Mammary epithelial cell (primary cell): ENCODE measurements at regions of chrX and their contacts with region 1.

Region 1: GRCh38 chrX:38220024-38220414 is 652 bp downstream of the SRPX start:
- DNase-seq: peak; percentile 54
- H3K4me3 ChIP-seq: peak overlapping the region; percentile 55 to 71 (median 65)
- H3K27ac ChIP-seq: peak overlapping the region; percentile 60
- H3K4me1 ChIP-seq: peaks cover 19% of the 10 kb centered on the region
- H3K27me3 ChIP-seq: no peaks in the 10 kb centered on the region
- CTCF ChIP-seq: peak; percentile 20 to 52

Region 2: DNA sequence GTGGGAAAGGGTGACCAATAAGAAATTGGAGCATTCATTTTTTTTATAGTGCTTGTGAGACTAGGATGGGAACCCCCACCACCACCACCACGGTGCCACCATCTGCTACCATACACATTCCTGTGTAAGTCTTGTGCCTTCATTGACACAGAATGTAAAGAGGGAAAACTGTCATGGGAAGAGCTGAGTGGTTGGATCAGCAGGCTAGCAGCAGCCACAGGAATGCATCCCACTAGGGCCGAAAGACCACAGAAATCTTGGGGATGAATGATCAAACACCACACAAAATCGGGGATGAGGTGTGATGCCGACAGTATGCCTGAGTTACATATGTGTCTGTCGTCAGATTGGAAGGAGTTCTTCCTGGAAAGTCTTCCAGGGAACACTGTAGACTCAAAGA is 68.6 kb before region 1 on chrX:
- CTCF ChIA-PET with region 1: no interaction called
- dilution Hi-C with region 1: no loop called
- in situ Hi-C with region 1: no loop called
- intact Hi-C with region 1: no loop called
- DNase-seq: no peak
- H3K4me3 ChIP-seq: no peak overlapping the region
- H3K27ac ChIP-seq: no peak overlapping the region
- H3K4me1 ChIP-seq: no peaks in the 10 kb centered on the region
- H3K27me3 ChIP-seq: peaks cover 2% of the 10 kb centered on the region
- CTCF ChIP-seq: no peak

Region 3: DNA sequence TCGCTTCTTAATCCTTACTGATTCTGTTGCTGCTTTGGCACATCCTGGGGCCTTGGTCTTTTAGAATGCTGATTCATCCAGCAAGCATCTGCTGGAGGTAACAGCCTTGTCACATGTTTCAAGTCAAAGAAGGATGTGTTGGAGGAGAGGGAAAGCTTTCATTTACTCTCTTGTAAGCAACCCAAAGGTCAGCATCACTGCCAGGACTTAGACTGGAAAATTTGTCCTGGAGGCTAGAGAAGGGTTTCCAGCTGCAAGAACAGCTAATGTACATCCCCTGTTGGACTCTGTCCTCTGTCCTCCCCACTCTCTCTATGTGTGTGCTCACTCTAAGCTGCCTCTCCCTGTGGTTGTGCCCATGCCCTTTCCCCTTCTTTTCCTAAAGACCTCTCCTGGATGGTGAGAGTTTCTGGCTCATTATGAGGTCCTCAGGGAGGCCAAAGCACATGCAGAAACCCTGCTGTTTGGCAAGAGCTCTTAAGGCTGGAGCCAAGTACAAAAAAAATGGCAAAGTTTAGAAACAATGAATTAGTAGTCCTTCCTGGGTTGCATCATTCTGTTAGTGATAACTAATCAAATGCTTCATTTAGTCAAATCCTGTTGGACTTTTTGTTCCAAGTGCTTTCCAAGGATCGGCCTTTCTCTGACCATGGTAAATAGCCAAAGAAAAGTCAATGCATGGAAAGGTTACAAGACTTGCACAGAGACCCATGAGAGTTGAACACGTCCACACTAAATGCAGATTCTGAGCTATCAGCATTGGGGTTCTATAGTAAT is 14.1 kb after region 1 on chrX:
- CTCF ChIA-PET with region 1: no interaction called
- dilution Hi-C with region 1: no loop called
- in situ Hi-C with region 1: no loop called
- intact Hi-C with region 1: loop called (anchors 2 kb)
- DNase-seq: peak; percentile 61
- H3K4me3 ChIP-seq: no peak overlapping the region
- H3K27ac ChIP-seq: peak overlapping the region; percentile 31
- H3K4me1 ChIP-seq: peaks cover 33% of the 10 kb centered on the region
- H3K27me3 ChIP-seq: no peaks in the 10 kb centered on the region
- CTCF ChIP-seq: no peak

Region 4: GRCh38 chrX:38260231-38260630 is 40.2 kb after region 1 on chrX:
- CTCF ChIA-PET with region 1: interaction called, 3 read pairs
- dilution Hi-C with region 1: no loop called
- in situ Hi-C with region 1: no loop called
- intact Hi-C with region 1: loop called (anchors 1 kb)
- DNase-seq: no peak
- H3K4me3 ChIP-seq: no peak overlapping the region
- H3K27ac ChIP-seq: no peak overlapping the region
- H3K4me1 ChIP-seq: no peaks in the 10 kb centered on the region
- H3K27me3 ChIP-seq: peaks cover 2% of the 10 kb centered on the region
- CTCF ChIP-seq: peak; percentile 57 to 71

Region 5: DNA sequence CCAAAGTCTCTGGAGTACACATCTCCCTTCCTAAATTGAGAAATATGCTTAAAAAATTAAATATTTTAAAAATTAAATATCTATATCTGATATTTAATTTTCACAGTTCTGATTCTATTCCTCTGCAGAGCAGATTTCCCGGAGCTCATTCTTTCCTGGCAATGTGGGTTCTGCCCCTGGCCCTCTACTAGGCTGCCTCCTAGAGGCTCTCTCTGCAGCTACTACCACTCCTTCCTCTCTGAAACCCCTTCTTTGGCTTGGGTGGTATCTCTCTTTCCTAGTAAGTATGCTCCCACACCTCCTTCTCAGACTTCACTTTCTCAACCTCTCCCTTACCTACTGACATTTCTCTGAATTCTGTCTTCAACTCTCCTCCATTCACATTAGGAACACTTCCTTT is 62.0 kb after region 1 on chrX:
- CTCF ChIA-PET with region 1: interaction called, 4 read pairs
- dilution Hi-C with region 1: no loop called
- in situ Hi-C with region 1: loop called in 1 of 2 experiments (anchors 10 kb)
- intact Hi-C with region 1: no loop called
- DNase-seq: no peak
- H3K4me3 ChIP-seq: no peak overlapping the region
- H3K27ac ChIP-seq: no peak overlapping the region
- H3K4me1 ChIP-seq: peaks cover 2% of the 10 kb centered on the region
- H3K27me3 ChIP-seq: no peaks in the 10 kb centered on the region
- CTCF ChIP-seq: peak; percentile 15 to 47